ENCODE measurements at regions of chr13 and their contacts with region 1.

Region 1: DNA sequence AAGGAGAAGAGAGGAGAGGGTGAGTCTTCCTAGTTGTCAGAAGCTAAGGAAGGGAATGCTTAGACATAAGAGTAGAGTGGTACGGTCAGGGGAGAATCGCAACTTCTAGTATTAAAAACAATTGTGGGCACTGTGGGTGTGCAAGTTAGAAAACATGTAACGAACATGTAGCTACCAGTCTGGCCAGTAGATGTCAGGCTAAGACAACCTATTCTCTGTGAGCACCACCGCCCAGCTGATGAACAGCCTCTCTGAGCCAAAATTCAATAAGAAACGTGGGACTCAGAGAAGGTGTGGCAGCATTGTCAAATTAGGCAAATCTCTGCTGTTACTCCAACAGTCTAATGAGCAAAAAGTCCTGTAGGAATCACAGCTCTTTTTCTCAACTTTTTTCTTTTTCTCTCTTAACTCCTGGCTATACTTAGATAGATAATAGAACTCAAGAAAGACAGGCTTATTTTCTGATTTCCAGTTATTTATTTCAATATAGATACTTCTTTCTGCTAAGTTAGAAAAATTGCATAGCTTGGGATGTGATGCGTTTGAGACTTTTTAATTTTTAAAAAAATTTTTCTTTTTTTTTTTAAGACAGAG is 186.2 kb downstream of the USP12 start:
- DNase-seq: peak; percentile 81 to 91 (median 87)
- H3K4me3 ChIP-seq: no peak overlapping the region
- H3K27ac ChIP-seq: no peak overlapping the region
- H3K4me1 ChIP-seq: peaks cover 16 to 48% (median 31%) of the 10 kb centered on the region in 4 experiments
- H3K27me3 ChIP-seq: no peaks in the 10 kb centered on the region

Region 2: GRCh38 chr13:26831336-26831908 is 154.0 kb before region 1 on chr13:
- CTCF ChIA-PET with region 1: no interaction called
- POLR2A ChIA-PET with region 1: no interaction called
- DNase-seq: peak in 1 of 3 donors; percentile 12
- H3K4me3 ChIP-seq: no peak overlapping the region
- H3K27ac ChIP-seq: no peak overlapping the region
- H3K4me1 ChIP-seq: no peaks in the 10 kb centered on the region
- H3K27me3 ChIP-seq: peaks cover 0 to 4% (median 0%) of the 10 kb centered on the region in 5 experiments

Region 3: DNA sequence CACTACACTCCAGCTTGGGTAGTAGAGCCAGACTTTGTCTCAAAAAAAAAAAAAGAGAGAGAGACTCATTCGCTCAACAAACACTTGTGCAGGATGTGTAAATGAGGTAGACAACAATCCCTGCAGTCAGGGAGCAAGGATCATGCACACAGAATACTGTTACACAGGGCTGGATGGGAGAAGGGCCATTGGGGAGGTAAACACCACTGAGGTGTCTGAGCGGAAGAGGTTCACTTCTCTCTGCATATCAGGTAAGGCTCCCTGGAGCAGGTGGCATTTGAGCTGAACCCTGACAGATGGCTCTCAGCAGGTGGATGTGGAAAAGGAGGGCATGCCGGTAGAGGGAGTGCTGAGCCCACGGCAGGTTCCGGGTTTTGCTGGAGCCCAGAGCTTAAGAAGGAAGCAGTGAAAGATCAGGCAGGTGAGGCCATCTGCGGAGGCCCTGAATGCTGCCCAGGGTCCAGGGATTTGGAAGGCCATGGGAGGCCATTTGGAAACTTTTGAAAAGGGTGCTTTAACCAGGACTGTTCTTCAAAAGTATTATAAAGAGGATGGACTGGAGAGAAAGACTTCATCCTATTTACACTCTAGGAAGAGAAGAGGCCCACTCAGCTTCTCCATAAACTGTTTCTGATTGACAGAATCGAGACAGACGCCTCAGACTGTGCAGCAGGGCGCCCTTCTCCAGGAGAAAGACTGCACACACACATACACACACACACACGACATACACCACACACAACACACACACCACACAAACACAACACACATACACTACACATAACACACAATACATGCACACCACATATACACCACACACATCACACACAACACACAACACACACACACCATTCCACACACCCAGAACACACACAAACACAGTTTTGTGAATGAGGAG is 13.1 kb before region 1 on chr13:
- CTCF ChIA-PET with region 1: interaction called, 106 read pairs
- POLR2A ChIA-PET with region 1: interaction called, 5 read pairs
- DNase-seq: peak; percentile 73 to 87 (median 77)
- H3K4me3 ChIP-seq: no peak overlapping the region
- H3K27ac ChIP-seq: no peak overlapping the region
- H3K4me1 ChIP-seq: peaks cover 0 to 23% (median 9%) of the 10 kb centered on the region in 4 experiments
- H3K27me3 ChIP-seq: no peaks in the 10 kb centered on the region

Region 4: DNA sequence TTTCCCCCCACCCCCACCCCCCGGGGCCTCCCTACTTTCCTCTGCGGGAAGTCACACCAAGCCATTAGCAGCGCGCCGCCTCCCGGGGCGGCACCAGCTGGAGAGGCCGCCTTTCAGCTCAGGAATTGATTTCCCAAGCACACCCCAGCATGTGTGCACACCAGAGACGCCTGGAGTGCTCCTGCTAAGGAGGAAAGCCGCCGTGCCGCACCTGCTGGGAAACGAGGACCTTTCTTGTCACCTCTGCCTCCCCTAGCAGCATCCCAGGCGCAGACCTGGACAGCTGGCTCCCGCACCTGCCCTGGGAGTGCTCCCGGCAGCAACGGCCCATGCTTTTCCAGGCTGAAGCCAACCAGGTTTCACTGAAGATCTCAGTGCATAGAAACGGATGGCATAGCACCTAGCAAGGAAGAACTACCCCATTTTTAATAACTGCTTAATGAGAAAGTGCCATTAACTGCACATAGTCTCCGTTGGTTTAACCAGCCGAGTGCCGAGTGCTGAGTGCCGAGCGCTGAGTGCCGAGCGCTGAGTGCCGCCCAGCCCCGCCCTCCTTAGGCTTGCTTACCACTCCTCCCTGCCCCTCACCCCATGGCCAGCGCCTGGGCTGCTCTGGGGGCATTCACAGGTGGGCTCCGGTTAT is 21.3 kb after region 1 on chr13:
- CTCF ChIA-PET with region 1: interaction called, 18 read pairs
- POLR2A ChIA-PET with region 1: no interaction called
- DNase-seq: peak in 1 of 3 donors; percentile 18
- H3K4me3 ChIP-seq: peak overlapping the region; percentile 40 to 80 (median 57)
- H3K27ac ChIP-seq: no peak overlapping the region
- H3K4me1 ChIP-seq: peaks cover 0 to 21% (median 20%) of the 10 kb centered on the region in 4 experiments
- H3K27me3 ChIP-seq: peaks cover 0 to 19% (median 3%) of the 10 kb centered on the region in 5 experiments

Region 5: GRCh38 chr13:27353166-27353583 is 367.8 kb after region 1 on chr13:
- CTCF ChIA-PET with region 1: interaction called, 181 read pairs
- POLR2A ChIA-PET with region 1: interaction called, 3 read pairs
- DNase-seq: no peak
- H3K4me3 ChIP-seq: no peak overlapping the region
- H3K27ac ChIP-seq: no peak overlapping the region
- H3K4me1 ChIP-seq: no peaks in the 10 kb centered on the region
- H3K27me3 ChIP-seq: peaks cover 0 to 3% (median 0%) of the 10 kb centered on the region in 5 experiments

Measured in common myeloid progenitor, CD34-positive (primary cell).